ENCODE measurements at regions of chr3 and their contacts with region 1.

Region 1: DNA sequence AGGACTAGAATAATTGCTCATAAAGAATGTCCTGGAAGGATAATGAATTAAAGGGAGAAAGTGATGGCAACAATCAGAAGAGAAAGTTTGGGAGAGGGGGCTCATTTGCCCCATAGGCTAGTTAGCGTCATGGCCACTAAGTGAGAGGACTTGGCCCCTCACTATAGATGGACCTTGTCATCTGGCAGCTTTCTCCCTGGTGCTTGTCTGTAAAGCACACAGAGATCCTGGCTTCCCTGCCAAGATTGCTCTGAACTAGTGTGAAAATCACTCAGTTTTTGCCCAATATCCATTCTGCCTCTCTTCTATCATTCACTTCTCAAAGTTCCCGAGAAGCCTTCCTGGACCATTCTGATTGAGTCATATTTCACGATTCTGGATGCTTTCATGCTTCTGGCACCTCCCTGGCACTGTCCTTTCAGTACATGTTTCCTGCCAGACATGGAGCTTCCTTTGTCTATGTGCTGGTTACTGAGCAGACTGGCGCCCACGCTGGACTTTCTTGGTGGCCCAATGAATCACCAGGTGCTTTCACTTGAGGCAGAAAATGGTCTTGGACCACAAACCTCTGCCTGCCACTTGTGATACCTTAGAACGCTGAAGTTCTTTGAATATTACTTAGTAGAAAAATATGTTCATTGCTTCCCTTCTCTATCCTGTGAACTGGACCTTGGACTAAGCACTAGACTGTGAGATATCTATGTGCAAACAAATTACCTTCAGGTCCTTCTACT is 709.6 kb upstream of the CFAP20DC start:
- DNase-seq: peak; percentile 55
- H3K4me3 Mint-ChIP-seq: no peak overlapping the region
- H3K27ac Mint-ChIP-seq: no peak overlapping the region
- H3K4me1 Mint-ChIP-seq: peaks cover 86% of the 10 kb centered on the region
- H3K27me3 Mint-ChIP-seq: no peaks in the 10 kb centered on the region

Region 2: DNA sequence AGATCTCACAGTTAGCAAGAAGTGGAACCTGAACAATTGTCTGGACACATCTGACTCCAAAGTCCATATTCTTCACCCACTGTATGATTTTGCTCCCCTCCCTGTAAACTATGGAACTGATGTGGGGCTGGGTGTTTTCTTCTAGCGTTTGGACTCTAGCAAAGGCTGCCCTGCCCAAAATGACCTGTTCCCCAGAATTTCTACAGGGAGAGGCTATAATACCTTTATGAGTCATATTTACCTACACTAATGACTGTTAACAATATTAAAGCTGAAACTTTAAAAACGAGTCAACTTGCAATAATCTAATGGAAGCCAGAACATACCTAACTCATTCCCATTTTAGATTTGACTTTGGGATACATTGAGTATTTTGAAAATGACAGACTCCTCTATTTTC is 178.5 kb before region 1 on chr3:
- CTCF ChIA-PET with region 1: no interaction called
- intact Hi-C with region 1: loop called (anchors 2 kb)
- DNase-seq: no peak
- H3K4me3 Mint-ChIP-seq: no peak overlapping the region
- H3K27ac Mint-ChIP-seq: no peak overlapping the region
- H3K4me1 Mint-ChIP-seq: peaks cover 15% of the 10 kb centered on the region
- H3K27me3 Mint-ChIP-seq: no peaks in the 10 kb centered on the region

Region 3: GRCh38 chr3:59726279-59726678 is 33.2 kb before region 1 on chr3:
- CTCF ChIA-PET with region 1: no interaction called
- intact Hi-C with region 1: loop called (anchors 1 kb)
- DNase-seq: peak; percentile 49
- H3K4me3 Mint-ChIP-seq: no peak overlapping the region
- H3K27ac Mint-ChIP-seq: no peak overlapping the region
- H3K4me1 Mint-ChIP-seq: peaks cover 20% of the 10 kb centered on the region
- H3K27me3 Mint-ChIP-seq: no peaks in the 10 kb centered on the region

Region 4: DNA sequence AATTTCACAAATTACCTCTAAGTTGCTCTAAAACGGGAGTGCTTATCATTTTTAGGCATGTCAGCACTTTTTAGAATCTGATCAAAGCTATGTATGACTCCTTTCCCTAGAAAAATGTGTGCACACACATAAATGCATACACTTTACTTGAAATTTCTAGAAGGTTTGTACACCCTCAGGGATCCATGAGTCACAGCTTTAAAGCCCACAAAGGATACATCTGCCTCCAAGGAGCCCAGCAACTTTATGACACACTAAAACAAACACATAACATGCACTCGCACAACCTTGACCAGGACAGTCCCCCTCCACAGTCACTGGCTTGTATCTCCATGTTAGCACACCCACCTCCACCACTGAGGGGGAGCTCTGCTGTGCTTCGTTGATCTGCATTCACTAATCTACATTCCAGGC is 12.3 kb after region 1 on chr3:
- CTCF ChIA-PET with region 1: interaction called, 7 read pairs
- intact Hi-C with region 1: loop called (anchors 1 kb)
- DNase-seq: no peak
- H3K4me3 Mint-ChIP-seq: no peak overlapping the region
- H3K27ac Mint-ChIP-seq: no peak overlapping the region
- H3K4me1 Mint-ChIP-seq: peaks cover 37% of the 10 kb centered on the region
- H3K27me3 Mint-ChIP-seq: no peaks in the 10 kb centered on the region

Region 5: GRCh38 chr3:59783468-59783988 is 24.1 kb after region 1 on chr3:
- CTCF ChIA-PET with region 1: interaction called, 3 read pairs
- intact Hi-C with region 1: loop called (anchors 1 kb)
- DNase-seq: peak; percentile 61
- H3K4me3 Mint-ChIP-seq: no peak overlapping the region
- H3K27ac Mint-ChIP-seq: no peak overlapping the region
- H3K4me1 Mint-ChIP-seq: peaks cover 35% of the 10 kb centered on the region
- H3K27me3 Mint-ChIP-seq: no peaks in the 10 kb centered on the region

Region 6: GRCh38 chr3:59978979-59979378 is 219.5 kb after region 1 on chr3:
- CTCF ChIA-PET with region 1: no interaction called
- intact Hi-C with region 1: loop called (anchors 5 kb)
- DNase-seq: peak; percentile 75
- H3K4me3 Mint-ChIP-seq: peak overlapping the region; percentile 39
- H3K27ac Mint-ChIP-seq: peak overlapping the region; percentile 94
- H3K4me1 Mint-ChIP-seq: peaks cover 83% of the 10 kb centered on the region
- H3K27me3 Mint-ChIP-seq: no peaks in the 10 kb centered on the region

Region 7: GRCh38 chr3:60073942-60074341 is 314.5 kb after region 1 on chr3:
- CTCF ChIA-PET with region 1: no interaction called
- intact Hi-C with region 1: loop called (anchors 5 kb)
- DNase-seq: no peak
- H3K4me3 Mint-ChIP-seq: peak overlapping the region; percentile 62
- H3K27ac Mint-ChIP-seq: peak overlapping the region; percentile 98
- H3K4me1 Mint-ChIP-seq: peaks cover 74% of the 10 kb centered on the region
- H3K27me3 Mint-ChIP-seq: no peaks in the 10 kb centered on the region

Measured in activated naive CD4-positive, alpha-beta T cell treated with anti-CD3 and anti-CD28 coated beads for 36 hours (primary cell).